ENCODE measurements at regions of chr3 and their contacts with region 1.

Region 1: GRCh38 chr3:57597122-57597923 is at the start of gene ARF4:
- DNase-seq: peak; percentile 98 to 100 (median 99)
- ATAC-seq: peak; percentile 87
- H3K4me3 ChIP-seq: peak within 1 kb of the TSS; percentile 92 to 95
- H3K4me3 Mint-ChIP-seq: peak within 1 kb of the TSS; percentile 99
- H3K27ac ChIP-seq: peak within 1 kb of the TSS; percentile 93 to 95
- H3K27ac Mint-ChIP-seq: peak within 1 kb of the TSS; percentile 100
- H3K4me1 ChIP-seq: peaks cover 42% of the 10 kb centered on the region
- H3K4me1 Mint-ChIP-seq: peaks cover 58% of the 10 kb centered on the region
- H3K27me3 ChIP-seq: no peaks in the 10 kb centered on the region
- H3K27me3 Mint-ChIP-seq: no peaks in the 10 kb centered on the region
- CTCF ChIP-seq: no peak
- total RNA-seq, gene ARF4: 72.7 to 73.5 TPM

Region 2: GRCh38 chr3:56556908-56557830 is 1040.2 kb before region 1 on chr3 and contains the start of gene CCDC66:
- CTCF ChIA-PET with region 1: no interaction called
- POLR2A ChIA-PET with region 1: no interaction called
- intact Hi-C with region 1: loop called in 1 of 2 experiments (anchors 5 kb)
- DNase-seq: peak; percentile 88 to 96 (median 94)
- ATAC-seq: peak; percentile 89
- H3K4me3 ChIP-seq: peak within 1 kb of the TSS; percentile 70 to 78
- H3K4me3 Mint-ChIP-seq: peak within 1 kb of the TSS; percentile 100
- H3K27ac ChIP-seq: peak within 1 kb of the TSS; percentile 91 to 93
- H3K27ac Mint-ChIP-seq: peak within 1 kb of the TSS; percentile 100
- H3K4me1 ChIP-seq: peaks cover 22% of the 10 kb centered on the region
- H3K4me1 Mint-ChIP-seq: peaks cover 32% of the 10 kb centered on the region
- H3K27me3 ChIP-seq: no peaks in the 10 kb centered on the region
- H3K27me3 Mint-ChIP-seq: no peaks in the 10 kb centered on the region
- CTCF ChIP-seq: peak; percentile 83
- total RNA-seq, gene CCDC66: 63.9 to 65.4 TPM

Region 3: GRCh38 chr3:56806407-56806806 is 790.9 kb before region 1 on chr3:
- CTCF ChIA-PET with region 1: no interaction called
- POLR2A ChIA-PET with region 1: no interaction called
- intact Hi-C with region 1: no loop called
- DNase-seq: no peak
- ATAC-seq: no peak
- H3K4me3 ChIP-seq: no peak overlapping the region
- H3K4me3 Mint-ChIP-seq: no peak overlapping the region
- H3K27ac ChIP-seq: no peak overlapping the region
- H3K27ac Mint-ChIP-seq: no peak overlapping the region
- H3K4me1 ChIP-seq: peaks cover 16% of the 10 kb centered on the region
- H3K4me1 Mint-ChIP-seq: peaks cover 18% of the 10 kb centered on the region
- H3K27me3 ChIP-seq: no peaks in the 10 kb centered on the region
- H3K27me3 Mint-ChIP-seq: no peaks in the 10 kb centered on the region
- CTCF ChIP-seq: no peak

Region 4: DNA sequence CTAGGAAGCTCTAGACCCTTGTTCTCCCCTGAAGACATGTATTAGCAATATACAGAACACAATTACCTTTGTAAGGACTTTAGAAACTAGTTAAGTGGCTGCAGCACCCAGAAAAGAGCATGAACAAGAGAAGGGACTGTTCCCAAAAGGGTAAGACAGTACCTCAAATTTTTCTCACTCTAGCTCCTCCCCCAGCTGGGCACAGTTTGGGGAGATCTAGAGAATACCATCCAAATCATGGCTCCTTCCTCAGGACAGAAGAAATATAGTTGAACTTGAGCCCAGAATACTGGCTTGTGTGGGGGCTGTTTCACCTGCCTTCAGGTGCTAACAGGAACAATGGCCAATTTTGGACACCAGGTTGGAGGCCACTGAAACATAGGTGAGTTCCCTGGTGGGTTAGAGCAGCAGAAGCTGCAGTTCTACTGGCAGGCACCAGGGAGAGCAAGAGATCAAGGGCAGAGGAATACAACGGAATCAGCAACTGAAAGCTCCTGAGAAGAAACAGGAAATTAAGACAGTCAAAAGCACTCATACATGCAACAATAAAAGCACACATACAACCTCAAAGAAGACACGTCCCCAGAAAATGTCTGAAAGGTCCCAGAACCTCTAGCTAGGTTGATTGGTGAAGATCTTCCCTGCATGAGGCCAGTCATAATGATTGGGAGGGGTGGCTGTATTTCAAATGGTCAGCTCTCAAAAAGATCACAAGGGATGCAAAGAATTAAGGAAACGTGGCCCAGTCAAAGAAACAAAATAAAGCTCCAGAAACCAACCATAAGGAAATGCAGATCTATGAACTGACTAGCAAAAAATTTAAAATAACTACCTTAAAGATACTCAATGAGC is 199.9 kb before region 1 on chr3:
- CTCF ChIA-PET with region 1: no interaction called
- POLR2A ChIA-PET with region 1: no interaction called
- intact Hi-C with region 1: loop called in 1 of 2 experiments (anchors 10 kb)
- DNase-seq: peak; percentile 16 to 76 (median 53)
- ATAC-seq: peak; percentile 98
- H3K4me3 ChIP-seq: peak overlapping the region in 1 of 2 experiments; percentile 6
- H3K4me3 Mint-ChIP-seq: peak overlapping the region; percentile 50
- H3K27ac ChIP-seq: no peak overlapping the region
- H3K27ac Mint-ChIP-seq: peak overlapping the region; percentile 38
- H3K4me1 ChIP-seq: peaks cover 8% of the 10 kb centered on the region
- H3K4me1 Mint-ChIP-seq: peaks cover 15% of the 10 kb centered on the region
- H3K27me3 ChIP-seq: no peaks in the 10 kb centered on the region
- H3K27me3 Mint-ChIP-seq: peaks cover 3% of the 10 kb centered on the region
- CTCF ChIP-seq: peak; percentile 87

Region 5: GRCh38 chr3:57582474-57583168 is 14.7 kb before region 1 on chr3:
- CTCF ChIA-PET with region 1: interaction called, 3 read pairs
- POLR2A ChIA-PET with region 1: interaction called, 7 read pairs
- intact Hi-C with region 1: loop called in 1 of 2 experiments (anchors 2 kb)
- DNase-seq: peak in 2 of 9 experiments; percentile 24 to 34
- ATAC-seq: peak; percentile 62
- H3K4me3 ChIP-seq: no peak overlapping the region
- H3K4me3 Mint-ChIP-seq: no peak overlapping the region
- H3K27ac ChIP-seq: no peak overlapping the region
- H3K27ac Mint-ChIP-seq: no peak overlapping the region
- H3K4me1 ChIP-seq: no peaks in the 10 kb centered on the region
- H3K4me1 Mint-ChIP-seq: peaks cover 28% of the 10 kb centered on the region
- H3K27me3 ChIP-seq: no peaks in the 10 kb centered on the region
- H3K27me3 Mint-ChIP-seq: no peaks in the 10 kb centered on the region
- CTCF ChIP-seq: no peak

Region 6: GRCh38 chr3:57692259-57693147 is 95.2 kb after region 1 on chr3 and contains the start of gene DENND6A:
- CTCF ChIA-PET with region 1: no interaction called
- POLR2A ChIA-PET with region 1: interaction called, 14 read pairs
- intact Hi-C with region 1: loop called (anchors 1 kb)
- DNase-seq: peak; percentile 91 to 98 (median 96)
- ATAC-seq: peak; percentile 73
- H3K4me3 ChIP-seq: peak within 1 kb of the TSS; percentile 55 to 78
- H3K4me3 Mint-ChIP-seq: peak within 1 kb of the TSS; percentile 92
- H3K27ac ChIP-seq: peak within 1 kb of the TSS; percentile 69 to 95
- H3K27ac Mint-ChIP-seq: peak within 1 kb of the TSS; percentile 89
- H3K4me1 ChIP-seq: peaks cover 45% of the 10 kb centered on the region
- H3K4me1 Mint-ChIP-seq: peaks cover 42% of the 10 kb centered on the region
- H3K27me3 ChIP-seq: no peaks in the 10 kb centered on the region
- H3K27me3 Mint-ChIP-seq: no peaks in the 10 kb centered on the region
- CTCF ChIP-seq: no peak
- total RNA-seq, gene DENND6A: 74.6 to 79.3 TPM

Region 7: DNA sequence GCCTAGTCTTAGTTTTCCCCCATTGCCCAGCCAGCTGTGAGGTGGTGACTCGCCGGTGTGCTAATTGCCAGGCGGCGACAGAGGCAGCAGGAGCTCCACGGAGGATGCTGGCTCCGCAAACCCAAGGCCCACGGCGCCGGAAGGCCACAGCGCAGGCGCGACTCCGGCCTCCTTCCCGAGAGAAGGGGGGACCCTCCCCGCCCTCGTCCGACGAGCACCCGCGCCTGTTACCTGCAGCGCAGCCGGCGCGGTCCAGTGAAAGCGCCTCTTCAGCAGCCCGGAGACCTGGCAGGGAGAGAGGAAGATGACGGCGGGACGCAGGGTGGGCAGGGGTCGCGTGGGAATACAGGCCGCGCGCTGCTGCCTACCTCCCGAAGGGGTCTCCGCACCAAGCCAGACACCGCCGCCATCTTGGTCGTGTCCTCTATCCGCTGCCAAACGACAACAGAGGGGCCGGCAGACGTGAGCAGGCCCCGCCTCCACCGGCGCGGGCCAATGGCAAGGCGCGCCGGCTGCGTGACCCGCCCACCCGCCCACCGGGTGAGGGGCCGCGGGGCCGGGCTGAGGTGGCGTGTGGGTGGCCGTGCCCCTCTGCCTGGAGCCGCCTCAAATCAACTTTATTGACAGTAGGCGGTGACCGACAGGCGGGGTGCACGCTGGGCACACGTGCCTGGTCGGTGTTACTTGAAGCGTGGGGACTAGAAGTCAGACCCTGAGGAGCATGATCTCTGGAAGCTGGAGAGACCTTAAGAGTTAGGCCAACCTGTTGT is 836.3 kb after region 1 on chr3 and contains the start of gene PDHB:
- CTCF ChIA-PET with region 1: no interaction called
- POLR2A ChIA-PET with region 1: interaction called, 3 read pairs
- intact Hi-C with region 1: loop called in 1 of 2 experiments (anchors 5 kb)
- DNase-seq: peak; percentile 74 to 94 (median 88)
- ATAC-seq: peak; percentile 97
- H3K4me3 ChIP-seq: peak within 1 kb of the TSS; percentile 88 to 98
- H3K4me3 Mint-ChIP-seq: peak within 1 kb of the TSS; percentile 92
- H3K27ac ChIP-seq: peak within 1 kb of the TSS; percentile 86 to 87
- H3K27ac Mint-ChIP-seq: peak within 1 kb of the TSS; percentile 97
- H3K4me1 ChIP-seq: peaks cover 10% of the 10 kb centered on the region
- H3K4me1 Mint-ChIP-seq: peaks cover 25% of the 10 kb centered on the region
- H3K27me3 ChIP-seq: no peaks in the 10 kb centered on the region
- H3K27me3 Mint-ChIP-seq: no peaks in the 10 kb centered on the region
- CTCF ChIP-seq: no peak
- total RNA-seq, gene PDHB: 32.5 to 33.2 TPM

Measured in CD8-positive, alpha-beta T cell (primary cell).